ENCODE measurements at regions of chr2 and their contacts with region 1.

Region 1: DNA sequence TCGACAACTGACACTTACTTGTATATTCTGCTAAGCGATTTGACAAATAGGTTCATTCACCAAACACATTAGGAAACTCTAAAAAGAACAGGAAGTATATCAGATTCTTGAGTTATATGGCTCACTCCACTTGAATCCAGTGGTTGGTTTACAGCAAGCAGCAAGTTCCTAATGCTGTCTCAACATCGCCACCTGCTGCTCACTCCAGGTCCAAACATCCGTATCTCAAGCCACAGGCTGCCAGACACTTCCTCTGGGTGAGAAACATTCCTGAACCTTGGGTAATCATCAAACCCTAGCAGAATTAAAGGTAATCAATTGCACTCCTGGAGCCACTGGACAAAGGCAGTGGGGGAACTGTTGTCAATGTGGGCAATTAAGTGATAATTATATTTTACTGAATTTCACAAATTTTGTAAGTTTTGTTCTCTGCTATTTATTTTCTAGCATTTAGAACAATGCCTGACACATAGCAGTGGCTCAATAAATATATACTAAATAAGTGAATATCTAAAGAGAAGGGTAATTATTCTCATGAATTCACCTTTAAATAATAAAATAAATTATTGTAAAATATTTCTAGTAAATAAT is 107.1 kb upstream of the TTN start:
- DNase-seq: peak; percentile 48 to 84
- ATAC-seq: peak; percentile 84

Region 2: GRCh38 chr2:178796079-178796677 is 118.2 kb before region 1 on chr2:
- intact Hi-C with region 1: loop called (anchors 5 to 10 kb)
- DNase-seq: no peak
- ATAC-seq: no peak

Region 3: DNA sequence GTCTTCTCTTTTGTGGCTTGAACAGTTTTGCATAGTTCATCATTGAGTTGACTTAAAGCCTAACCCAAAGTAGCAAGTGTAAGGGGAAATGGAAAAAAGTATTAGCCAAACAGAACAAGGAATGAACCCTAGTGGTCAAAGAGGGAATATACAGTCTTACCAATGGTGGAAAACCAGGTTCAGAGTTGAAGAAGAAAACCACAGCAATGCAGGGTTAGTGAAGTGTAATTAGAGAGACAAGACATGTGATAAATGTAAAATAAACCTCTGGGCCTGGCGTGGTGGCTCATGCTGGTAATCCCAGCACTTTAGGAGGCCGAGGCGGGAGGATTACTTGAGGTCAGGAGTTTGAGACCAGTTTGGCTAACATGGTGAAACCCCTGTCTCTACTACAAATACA is 109.6 kb before region 1 on chr2:
- intact Hi-C with region 1: loop called (anchors 5 to 10 kb)
- DNase-seq: no peak
- ATAC-seq: no peak

Measured in left colon (tissue), 2 donors.